CD4-positive, alpha-beta memory T cell (primary cell): ENCODE measurements at regions of chr17 and their contacts with region 1.

Region 1: GRCh38 chr17:48593840-48594537 is 410 bp upstream of the HOXB5 start:
- DNase-seq: peak; percentile 71 to 82 (median 77)
- H3K4me3 ChIP-seq: peak overlapping the region in 1 of 2 donors; percentile 30
- H3K4me3 Mint-ChIP-seq: peak overlapping the region; percentile 80 to 92 (median 82)
- H3K27ac ChIP-seq: no peak overlapping the region
- H3K27ac Mint-ChIP-seq: peak overlapping the region in 1 of 7 donors; percentile 74
- H3K4me1 ChIP-seq: peaks cover 46% of the 10 kb centered on the region
- H3K4me1 Mint-ChIP-seq: peaks cover 23 to 55% (median 43%) of the 10 kb centered on the region in 4 donors
- H3K27me3 ChIP-seq: peaks cover 47% of the 10 kb centered on the region
- H3K27me3 Mint-ChIP-seq: peaks cover 44 to 72% of the 10 kb centered on the region in 2 donors

Region 2: DNA sequence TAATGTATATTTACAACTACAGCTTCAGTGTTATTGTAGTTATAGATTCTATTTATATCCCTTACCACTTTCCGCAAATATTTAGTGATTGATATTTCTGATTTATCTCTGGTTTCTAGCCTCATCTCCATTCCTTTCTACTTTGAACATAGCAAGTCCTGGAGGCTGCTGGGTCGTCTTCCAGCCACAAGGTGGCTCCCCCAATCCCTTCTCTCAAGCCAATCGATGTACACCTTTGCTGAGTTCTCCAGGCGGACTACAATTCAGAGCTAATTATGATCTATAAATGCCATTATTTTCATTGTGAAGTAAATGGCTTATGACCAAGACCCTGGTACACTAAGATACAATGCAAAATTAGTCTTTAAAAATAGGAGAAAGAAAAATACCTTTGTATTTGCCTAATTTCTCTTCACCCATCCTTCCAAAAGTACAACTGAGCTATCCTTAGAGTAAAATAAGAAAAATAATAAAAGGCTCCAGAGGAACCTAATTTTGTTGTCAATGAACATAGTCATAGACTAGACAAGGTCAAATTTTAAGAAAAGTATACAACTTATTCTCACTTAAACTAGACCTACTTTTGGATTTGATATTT is 286.1 kb before region 1 on chr17:
- CTCF ChIA-PET with region 1: interaction called, 38 read pairs
- POLR2A ChIA-PET with region 1: no interaction called
- intact Hi-C with region 1: loop called (anchors 1 kb)
- DNase-seq: peak; percentile 38 to 55 (median 42)
- H3K4me3 ChIP-seq: no peak overlapping the region
- H3K4me3 Mint-ChIP-seq: no peak overlapping the region
- H3K27ac ChIP-seq: no peak overlapping the region
- H3K27ac Mint-ChIP-seq: peak overlapping the region in 2 of 7 donors; percentile 15 to 29
- H3K4me1 ChIP-seq: no peaks in the 10 kb centered on the region
- H3K4me1 Mint-ChIP-seq: peaks cover 15 to 33% (median 21%) of the 10 kb centered on the region in 4 donors
- H3K27me3 ChIP-seq: no peaks in the 10 kb centered on the region
- H3K27me3 Mint-ChIP-seq: no peaks in the 10 kb centered on the region

Region 3: DNA sequence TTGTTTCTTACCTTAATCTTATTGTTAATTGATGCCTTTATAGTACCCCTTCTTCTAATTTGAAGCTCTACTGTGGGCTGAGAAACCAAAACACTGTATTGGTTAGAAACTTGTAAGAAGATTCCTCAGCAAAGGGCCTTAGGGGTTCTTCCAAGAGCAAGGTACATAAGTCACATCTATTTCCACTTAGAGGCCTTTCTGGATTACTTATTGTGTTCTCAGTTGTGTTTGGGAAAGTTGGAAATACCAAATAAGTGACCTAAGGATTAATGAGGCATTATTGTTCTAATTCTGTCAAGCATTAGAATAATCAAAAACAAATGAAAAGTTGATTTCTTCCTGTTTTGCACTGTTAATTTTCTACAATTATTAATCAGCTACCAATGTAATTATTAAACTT is 249.7 kb before region 1 on chr17:
- CTCF ChIA-PET with region 1: interaction called, 59 read pairs
- POLR2A ChIA-PET with region 1: no interaction called
- intact Hi-C with region 1: no loop called
- DNase-seq: no peak
- H3K4me3 ChIP-seq: no peak overlapping the region
- H3K4me3 Mint-ChIP-seq: no peak overlapping the region
- H3K27ac ChIP-seq: no peak overlapping the region
- H3K27ac Mint-ChIP-seq: peak overlapping the region in 1 of 7 donors; percentile 53
- H3K4me1 ChIP-seq: peaks cover 4% of the 10 kb centered on the region
- H3K4me1 Mint-ChIP-seq: peaks cover 7 to 19% (median 11%) of the 10 kb centered on the region in 4 donors
- H3K27me3 ChIP-seq: no peaks in the 10 kb centered on the region
- H3K27me3 Mint-ChIP-seq: no peaks in the 10 kb centered on the region

Region 4: GRCh38 chr17:48492401-48493298 is 101.3 kb before region 1 on chr17:
- CTCF ChIA-PET with region 1: interaction called, 46 read pairs
- POLR2A ChIA-PET with region 1: interaction called, 6 read pairs
- intact Hi-C with region 1: loop called (anchors 1 kb)
- DNase-seq: peak; percentile 54 to 63 (median 58)
- H3K4me3 ChIP-seq: peak overlapping the region in 1 of 2 donors; percentile 38
- H3K4me3 Mint-ChIP-seq: peak overlapping the region; percentile 35 to 76 (median 56)
- H3K27ac ChIP-seq: no peak overlapping the region
- H3K27ac Mint-ChIP-seq: no peak overlapping the region
- H3K4me1 ChIP-seq: peaks cover 22% of the 10 kb centered on the region
- H3K4me1 Mint-ChIP-seq: peaks cover 6 to 21% (median 11%) of the 10 kb centered on the region in 4 donors
- H3K27me3 ChIP-seq: no peaks in the 10 kb centered on the region
- H3K27me3 Mint-ChIP-seq: peaks cover 1 to 6% of the 10 kb centered on the region in 2 donors

Region 5: DNA sequence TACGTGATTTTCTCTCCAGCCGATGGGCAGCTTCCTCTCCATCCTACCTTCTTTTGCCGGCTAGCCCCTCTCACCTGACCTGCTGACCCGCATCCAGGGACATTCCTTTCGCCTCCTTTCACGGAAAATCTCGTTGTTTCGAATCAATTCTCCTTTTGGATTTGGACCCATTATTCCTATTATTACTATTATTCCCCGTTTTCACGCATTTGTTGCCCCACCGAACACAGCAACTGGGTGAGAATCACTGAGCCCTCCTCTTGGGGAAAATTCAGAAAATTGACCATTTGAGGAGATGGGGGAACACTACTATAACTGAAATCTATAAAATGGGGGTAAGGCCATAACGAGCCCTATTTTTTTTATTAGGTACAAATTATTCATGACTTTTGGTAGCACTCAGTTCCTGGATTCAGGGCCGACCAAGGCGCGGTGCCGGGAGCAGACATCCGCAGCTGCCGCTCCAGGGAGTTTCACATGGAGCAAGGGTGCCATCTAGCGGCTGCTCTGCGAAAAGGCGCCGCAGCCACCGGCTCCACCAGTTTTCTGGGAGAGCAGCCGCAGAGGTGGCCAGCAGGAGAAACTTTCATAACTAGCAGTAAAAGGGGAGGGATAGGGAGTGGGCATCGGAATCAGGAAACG is 24.4 kb after region 1 on chr17:
- CTCF ChIA-PET with region 1: interaction called, 27 read pairs
- POLR2A ChIA-PET with region 1: interaction called, 4 read pairs
- intact Hi-C with region 1: no loop called
- DNase-seq: peak; percentile 73 to 84 (median 77)
- H3K4me3 ChIP-seq: no peak overlapping the region
- H3K4me3 Mint-ChIP-seq: peak overlapping the region in 6 of 8 donors; percentile 16 to 59 (median 35)
- H3K27ac ChIP-seq: no peak overlapping the region
- H3K27ac Mint-ChIP-seq: peak overlapping the region in 4 of 7 donors; percentile 75 to 91 (median 80)
- H3K4me1 ChIP-seq: peaks cover 35% of the 10 kb centered on the region
- H3K4me1 Mint-ChIP-seq: peaks cover 17 to 59% (median 30%) of the 10 kb centered on the region in 4 donors
- H3K27me3 ChIP-seq: peaks cover 89% of the 10 kb centered on the region
- H3K27me3 Mint-ChIP-seq: peaks cover 71 to 83% of the 10 kb centered on the region in 2 donors